GM10248 (cell line): ENCODE measurements at regions of chr5 and their contacts with region 1.

Region 1: DNA sequence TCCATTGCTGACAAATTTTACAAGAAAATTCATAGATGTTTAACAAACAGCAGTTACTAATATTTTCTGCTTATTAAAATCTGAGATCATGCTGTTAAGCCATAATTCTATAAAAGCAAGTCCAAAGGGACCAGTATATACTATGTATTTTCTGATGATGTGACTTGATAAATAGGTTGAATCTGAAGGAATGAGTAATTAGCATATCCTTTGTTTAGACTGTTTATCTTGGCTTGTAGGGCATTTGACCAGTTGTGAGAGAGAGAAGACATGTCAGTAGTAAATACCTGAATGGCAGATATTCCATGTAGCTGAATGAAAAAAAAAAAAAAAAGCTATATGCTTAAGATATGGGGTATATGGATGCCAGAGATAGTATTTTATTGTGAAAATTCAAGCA is 14.6 kb downstream of the CPEB4 start:
- DNase-seq: no peak
- CTCF ChIP-seq: no peak

Region 2: DNA sequence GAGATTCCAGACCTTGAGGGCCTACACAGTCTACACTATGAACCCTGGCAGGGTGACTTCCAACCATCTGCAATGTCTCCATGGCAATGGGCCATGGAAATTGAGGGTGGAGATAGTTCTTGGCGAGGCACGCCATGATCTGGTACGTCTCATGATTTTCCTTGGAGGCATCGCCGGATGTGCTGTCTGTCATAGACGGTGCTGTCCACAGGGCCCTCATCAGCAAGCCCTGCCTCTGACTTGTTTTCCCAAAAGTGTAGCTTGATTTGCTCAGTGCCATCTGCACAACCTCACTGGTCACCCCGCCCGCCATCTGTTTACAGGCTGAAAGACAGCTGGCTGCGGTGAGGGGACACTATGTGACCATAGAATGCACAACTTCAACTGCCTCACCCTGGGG is 359.8 kb before region 1 on chr5:
- CTCF ChIA-PET with region 1: no interaction called
- POLR2A ChIA-PET with region 1: no interaction called
- DNase-seq: no peak
- CTCF ChIP-seq: no peak

Region 3: DNA sequence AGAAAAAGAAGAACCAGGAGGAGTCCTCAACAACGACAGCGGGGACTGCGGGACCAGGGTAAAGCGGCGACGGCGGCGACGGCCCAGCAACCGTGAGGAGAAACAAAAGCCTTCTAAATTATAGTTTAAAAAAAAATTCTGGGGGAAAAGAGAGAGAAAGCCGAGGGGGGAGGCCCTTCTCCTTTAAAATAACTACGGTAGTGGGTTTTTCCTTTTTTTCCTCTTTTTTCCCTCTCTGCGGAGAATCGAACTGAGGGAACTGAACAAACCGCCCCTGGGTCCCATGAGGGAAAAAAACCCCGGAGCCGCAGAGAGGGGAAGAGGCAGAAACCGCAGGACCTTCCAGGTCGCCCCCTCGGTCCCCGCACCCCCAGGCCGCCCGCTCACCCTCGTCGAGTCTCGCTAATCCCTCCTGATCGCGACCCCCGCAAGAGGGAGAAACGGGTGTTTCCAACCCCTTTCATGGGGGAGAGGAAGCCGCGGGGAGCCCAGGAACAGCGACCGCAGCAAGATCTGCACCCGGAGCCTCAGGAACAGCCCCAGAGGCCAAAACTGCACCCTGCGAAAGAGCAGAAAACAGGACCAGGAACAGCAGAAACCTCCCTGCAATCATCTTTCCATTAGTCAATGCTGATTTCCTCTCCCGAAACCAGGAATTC is 14.1 kb before region 1 on chr5:
- CTCF ChIA-PET with region 1: interaction called, 15 read pairs
- POLR2A ChIA-PET with region 1: interaction called, 8 read pairs
- DNase-seq: no peak
- CTCF ChIP-seq: no peak

Region 4: GRCh38 chr5:173915310-173916014 is 12.7 kb after region 1 on chr5:
- CTCF ChIA-PET with region 1: interaction called, 14 read pairs
- POLR2A ChIA-PET with region 1: interaction called, 3 read pairs
- DNase-seq: no peak
- CTCF ChIP-seq: no peak